Mammary epithelial cell (primary cell): ENCODE measurements at regions of chr6 and their contacts with region 1.

Region 1: GRCh38 chr6:153312641-153313040 is 181.6 kb upstream of the RGS17 start:
- DNase-seq: peak; percentile 68
- H3K4me3 ChIP-seq: no peak overlapping the region
- H3K27ac ChIP-seq: no peak overlapping the region
- H3K4me1 ChIP-seq: no peaks in the 10 kb centered on the region
- H3K27me3 ChIP-seq: peaks cover 1% of the 10 kb centered on the region
- CTCF ChIP-seq: peak; percentile 43 to 56

Region 2: GRCh38 chr6:153059761-153060160 is 252.9 kb before region 1 on chr6:
- CTCF ChIA-PET with region 1: no interaction called
- dilution Hi-C with region 1: no loop called
- in situ Hi-C with region 1: loop called in 1 of 2 experiments (anchors 25 kb)
- intact Hi-C with region 1: no loop called
- DNase-seq: no peak
- H3K4me3 ChIP-seq: no peak overlapping the region
- H3K27ac ChIP-seq: no peak overlapping the region
- H3K4me1 ChIP-seq: peaks cover 20% of the 10 kb centered on the region
- H3K27me3 ChIP-seq: no peaks in the 10 kb centered on the region
- CTCF ChIP-seq: peak in 1 of 2 donors; percentile 8